Testis (tissue), 5 donors: ENCODE measurements at regions of chr12 and their contacts with region 1.

Region 1: GRCh38 chr12:49647827-49648711 is 24.7 kb downstream of the PRPF40B start:
- DNase-seq: no peak
- H3K4me3 ChIP-seq: no peak overlapping the region
- H3K27ac ChIP-seq: peak overlapping the region in 1 of 2 donors; percentile 53
- H3K4me1 ChIP-seq: peaks cover 15% of the 10 kb centered on the region
- H3K27me3 ChIP-seq: no peaks in the 10 kb centered on the region
- CTCF ChIP-seq: no peak
- POLR2A ChIP-seq: no peak

Region 2: GRCh38 chr12:49583366-49584094 is 64.5 kb before region 1 on chr12:
- intact Hi-C with region 1: no loop called
- DNase-seq: peak; percentile 14
- H3K4me3 ChIP-seq: no peak overlapping the region
- H3K27ac ChIP-seq: peak overlapping the region in 1 of 2 donors; percentile 37
- H3K4me1 ChIP-seq: peaks cover 27% of the 10 kb centered on the region
- H3K27me3 ChIP-seq: no peaks in the 10 kb centered on the region
- CTCF ChIP-seq: no peak
- POLR2A ChIP-seq: no peak

Region 3: DNA sequence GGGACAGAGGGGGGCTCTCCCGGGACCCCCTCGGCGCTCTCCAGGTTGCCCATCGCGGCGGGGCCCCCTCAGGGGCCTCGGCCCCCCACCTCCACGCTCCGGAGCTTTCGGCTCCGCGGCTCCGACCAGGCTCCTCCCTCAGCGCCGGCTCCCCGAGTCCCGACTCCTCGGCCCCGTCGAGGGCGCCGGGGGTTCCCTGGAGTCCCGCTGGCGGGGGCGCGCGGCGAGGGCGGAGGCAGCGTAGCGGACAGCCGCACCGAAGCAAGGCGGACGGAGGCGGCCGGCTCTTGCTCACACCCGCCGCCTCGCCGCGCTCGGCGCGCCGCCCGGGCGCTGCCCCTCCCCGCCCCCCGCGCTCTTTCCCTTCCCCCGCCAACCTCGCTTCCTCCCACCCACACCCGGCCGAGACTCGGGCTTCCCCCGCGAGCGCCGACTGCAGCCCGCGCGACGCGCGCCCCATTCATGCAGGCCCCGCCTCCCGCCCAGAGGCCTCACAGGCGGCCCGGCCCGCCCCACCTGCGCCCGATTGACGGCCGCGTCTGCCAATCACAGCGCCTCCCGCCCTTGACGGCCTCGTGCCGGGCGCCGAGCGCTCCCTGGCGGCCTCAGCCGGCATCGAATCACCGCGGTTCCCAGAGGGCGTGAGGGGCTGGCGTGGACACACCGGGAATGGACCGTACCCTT is 59.2 kb after region 1 on chr12 and contains the start of gene FMNL3:
- intact Hi-C with region 1: loop called (anchors 2 kb)
- DNase-seq: peak; percentile 99
- H3K4me3 ChIP-seq: peak within 1 kb of the TSS; percentile 95 to 96
- H3K27ac ChIP-seq: peak within 1 kb of the TSS; percentile 96 to 98
- H3K4me1 ChIP-seq: peaks cover 25% of the 10 kb centered on the region
- H3K27me3 ChIP-seq: no peaks in the 10 kb centered on the region
- CTCF ChIP-seq: peak; percentile 97 to 100 (median 100)
- POLR2A ChIP-seq: peak; percentile 9
- total RNA-seq, gene FMNL3: 40.5 to 73.5 TPM